BJ (cell line): ENCODE measurements at regions of chr6 and their contacts with region 1.

Region 1: DNA sequence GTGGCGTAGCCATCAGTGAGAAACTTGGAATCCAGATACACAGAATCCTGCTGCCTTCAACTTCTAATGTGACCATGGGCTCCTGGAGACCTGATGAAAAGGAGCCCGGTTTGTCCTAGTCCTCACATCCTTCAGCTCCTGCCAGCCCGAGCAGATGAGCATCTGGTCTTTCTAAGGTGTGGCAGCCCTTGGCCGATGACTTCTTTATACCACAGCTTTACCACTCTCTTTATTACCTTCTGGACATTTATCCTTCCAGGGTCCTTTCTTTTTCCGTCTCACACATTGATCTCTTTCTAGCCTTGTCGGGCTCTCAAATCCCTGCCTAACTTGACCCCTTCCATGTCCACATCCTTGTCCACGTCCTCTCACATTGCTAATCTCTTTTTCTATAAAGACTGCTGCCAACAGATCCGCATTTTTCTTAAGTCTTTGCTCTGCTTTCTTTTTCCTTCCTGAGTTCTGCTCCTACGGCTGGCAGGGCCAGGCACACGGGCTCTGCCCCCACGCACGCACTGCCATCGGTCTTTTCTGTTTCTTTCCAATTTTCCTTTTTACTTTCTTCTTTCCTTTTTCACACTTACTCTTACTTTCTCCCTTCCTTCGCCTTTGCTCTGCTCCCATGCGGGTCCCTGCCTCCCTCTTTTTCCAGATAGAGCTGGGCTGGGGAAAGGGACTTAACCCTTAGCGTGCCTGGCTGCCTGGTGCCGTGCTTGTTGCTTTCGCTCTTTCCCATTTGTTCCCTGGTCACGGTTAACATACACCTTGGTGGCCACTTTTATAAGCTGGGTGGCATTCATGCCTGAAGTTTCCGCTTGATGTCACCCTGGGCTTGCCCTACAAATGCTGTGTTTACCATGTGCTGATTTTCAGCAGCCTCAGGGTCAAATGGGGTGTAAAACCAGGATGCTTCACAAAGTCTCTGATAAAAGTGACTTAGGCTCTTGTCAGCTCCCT is 9.4 kb upstream of the GMPR start:
- DNase-seq: no peak
- H3K4me3 ChIP-seq: no peak overlapping the region
- H3K27me3 ChIP-seq: peaks cover 12% of the 10 kb centered on the region
- CTCF ChIP-seq: no peak

Region 2: DNA sequence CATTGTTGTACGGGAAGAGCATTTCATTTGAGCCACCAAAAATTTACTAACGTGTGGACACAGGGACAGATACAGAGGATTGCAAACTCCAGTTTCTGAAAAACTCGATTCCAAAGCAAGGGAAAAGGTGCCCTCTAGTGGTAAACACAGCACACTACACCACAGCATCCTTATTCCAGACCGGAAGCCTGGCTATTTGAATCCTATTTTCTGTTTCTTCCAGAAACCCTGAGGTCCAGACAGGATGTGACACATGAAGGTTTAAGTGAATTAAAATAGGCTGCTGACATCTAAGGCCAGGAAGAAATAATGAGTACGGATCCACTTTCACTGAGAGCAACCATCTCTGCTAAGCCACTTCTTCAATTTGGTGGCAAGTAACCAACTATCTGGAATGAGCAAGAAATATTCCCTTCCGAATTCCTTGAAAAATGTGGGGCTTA is 22.4 kb before region 1 on chr6:
- CTCF ChIA-PET with region 1: no interaction called
- POLR2A ChIA-PET with region 1: no interaction called
- DNase-seq: peak; percentile 56
- H3K4me3 ChIP-seq: no peak overlapping the region
- H3K27me3 ChIP-seq: peaks cover 3% of the 10 kb centered on the region; the same call in 1 of the 2 replicates
- CTCF ChIP-seq: peak; percentile 91

Region 3: GRCh38 chr6:16432075-16433032 is 203.4 kb after region 1 on chr6:
- CTCF ChIA-PET with region 1: no interaction called
- POLR2A ChIA-PET with region 1: interaction called, 15 read pairs
- DNase-seq: no peak
- H3K4me3 ChIP-seq: no peak overlapping the region
- H3K27me3 ChIP-seq: no peaks in the 10 kb centered on the region
- CTCF ChIP-seq: no peak